ENCODE measurements at regions of chr20 and their contacts with region 1.

Region 1: DNA sequence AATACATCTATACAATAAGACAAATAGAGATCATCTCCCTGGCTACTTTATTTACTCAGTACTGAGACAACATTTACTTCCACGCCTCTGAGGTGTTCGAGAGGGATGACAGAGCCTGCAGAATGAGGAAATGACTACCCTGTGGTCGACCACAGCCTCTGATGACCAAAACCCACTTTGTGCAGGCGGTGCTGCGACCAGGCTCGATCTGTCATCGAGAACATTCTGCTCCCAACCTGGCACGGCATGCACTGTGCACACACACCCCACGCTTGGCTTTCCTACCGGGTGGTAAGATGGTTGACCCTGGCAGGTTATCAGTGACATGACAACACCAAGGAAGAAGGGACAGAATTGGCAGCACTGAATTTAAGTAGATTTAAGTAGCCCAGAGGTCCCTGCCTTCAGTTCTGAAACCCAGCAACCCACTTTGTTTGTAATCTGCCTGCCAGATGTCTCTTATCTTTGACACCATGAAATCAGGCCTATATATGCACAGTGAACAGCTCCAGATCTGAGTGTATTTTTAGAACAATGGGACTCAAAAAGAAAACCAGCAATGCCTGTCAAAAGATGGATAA is 42.6 kb downstream of the TTI1 start:
- DNase-seq: no peak

Region 2: DNA sequence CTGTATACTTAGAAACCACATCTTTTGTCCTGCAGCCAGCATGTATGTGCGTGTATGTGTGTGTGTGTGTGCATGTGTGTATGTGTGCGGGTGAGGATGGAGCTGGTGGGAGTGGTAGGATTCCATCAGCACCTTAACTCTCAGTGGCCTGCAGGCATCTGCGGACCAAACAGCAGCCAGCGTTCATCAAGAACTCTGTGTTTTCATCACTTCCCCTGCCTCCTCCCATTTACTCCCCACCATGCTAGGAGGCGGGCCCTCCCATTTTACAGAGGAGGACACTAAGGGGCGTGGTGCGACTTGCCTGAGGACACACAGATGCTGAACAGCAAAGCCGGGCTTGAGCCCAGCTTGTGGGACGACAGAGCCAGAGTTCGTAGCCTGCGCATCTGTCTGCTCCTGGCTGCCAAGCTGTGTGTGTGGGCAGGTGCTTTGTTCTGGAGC is 78.8 kb before region 1 on chr20:
- in situ Hi-C with region 1: loop called (anchors 10 kb)
- DNase-seq: peak; percentile 47